RWPE1 (cell line): ENCODE measurements at regions of chr6 and their contacts with region 1.

Region 1: DNA sequence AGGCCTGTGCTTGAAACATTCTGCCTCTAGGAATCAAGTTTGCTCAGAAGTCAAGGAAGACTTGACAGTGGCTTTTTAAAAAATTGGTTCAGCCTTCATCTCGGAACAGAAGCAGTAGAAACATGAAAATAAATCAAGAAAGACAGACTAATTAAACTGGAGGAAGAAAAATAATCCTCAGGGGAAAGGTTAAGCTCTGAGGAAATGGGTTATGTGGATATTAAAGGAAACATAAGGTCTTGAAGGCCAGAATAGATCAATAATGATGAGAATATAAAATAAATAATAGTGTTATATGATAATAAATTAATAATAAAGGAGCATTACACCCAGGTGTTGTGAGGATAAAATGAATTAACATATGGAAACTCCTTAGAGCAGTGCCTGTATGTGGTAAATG is 121.7 kb downstream of the GPR63 start:
- DNase-seq: no peak
- H3K27ac ChIP-seq: no peak overlapping the region
- CTCF ChIP-seq: no peak

Region 2: GRCh38 chr6:96816301-96816817 is 100.8 kb after region 1 on chr6:
- CTCF ChIA-PET with region 1: no interaction called
- POLR2A ChIA-PET with region 1: no interaction called
- DNase-seq: no peak
- H3K27ac ChIP-seq: no peak overlapping the region
- CTCF ChIP-seq: no peak

Region 3: DNA sequence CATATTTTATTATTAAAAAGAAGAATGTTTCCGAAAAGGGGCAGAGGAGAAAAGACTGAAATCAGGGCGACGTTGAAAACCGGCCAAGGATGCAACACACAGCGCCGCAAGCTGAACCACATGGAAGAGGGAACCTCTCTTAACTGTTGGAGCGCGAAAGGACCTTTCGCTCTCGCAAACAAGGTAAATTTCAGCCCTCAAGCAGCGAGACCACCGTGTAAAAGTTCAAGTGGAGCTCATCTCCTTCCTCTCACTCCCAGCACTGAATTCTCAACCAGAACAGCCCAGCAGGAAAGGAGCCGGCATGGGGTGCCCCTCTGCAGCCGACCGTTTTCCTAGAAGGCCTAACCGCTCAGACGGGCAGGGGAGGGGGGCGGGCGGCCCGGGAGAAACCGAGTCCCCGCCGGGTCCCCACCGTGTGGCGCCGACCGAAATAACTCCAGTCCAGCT is 121.0 kb after region 1 on chr6:
- CTCF ChIA-PET with region 1: interaction called, 10 read pairs
- POLR2A ChIA-PET with region 1: no interaction called
- DNase-seq: no peak
- H3K27ac ChIP-seq: no peak overlapping the region
- CTCF ChIP-seq: no peak